ENCODE measurements at regions of chr9 and their contacts with region 1.

Region 1: DNA sequence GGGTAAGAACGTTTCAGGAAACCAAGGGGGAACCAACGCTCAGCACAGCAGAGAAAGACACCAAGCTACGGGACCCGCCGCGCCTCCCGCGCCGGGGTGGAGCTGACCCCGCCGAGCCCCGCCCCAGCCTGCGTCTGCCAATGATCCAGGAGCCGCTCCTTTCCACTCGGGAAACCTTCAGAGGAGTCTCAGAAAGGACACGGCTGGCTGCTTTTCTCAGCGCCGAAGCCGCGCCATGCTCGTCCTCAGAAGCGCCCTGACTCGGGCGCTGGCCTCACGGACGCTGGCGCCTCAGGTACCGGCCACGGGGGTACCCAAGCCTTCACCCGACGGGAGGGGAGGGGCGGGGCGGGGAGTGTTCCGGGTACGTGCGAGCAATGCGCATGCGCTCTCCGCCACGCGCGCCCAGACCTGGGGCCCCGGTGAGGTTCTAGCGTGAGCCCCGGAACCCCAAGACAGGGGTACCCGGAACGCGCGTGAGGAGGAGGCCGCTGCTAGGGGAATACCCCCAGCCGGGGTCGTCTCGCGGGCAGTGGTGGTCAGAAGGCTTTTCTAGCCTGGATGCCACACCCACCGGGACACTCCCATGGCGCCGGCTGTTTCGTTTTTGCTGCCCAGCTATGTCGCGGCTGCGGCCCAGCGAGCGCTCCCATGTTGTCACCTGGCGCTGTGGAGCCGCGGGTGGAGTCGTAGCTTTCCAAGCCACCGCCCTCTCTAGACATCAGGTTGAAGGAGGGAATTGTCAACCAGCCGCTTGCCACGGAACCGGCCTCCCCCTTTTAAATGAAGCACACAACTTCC is at the start of gene NIPSNAP3A:
- DNase-seq: peak; percentile 89
- H3K4me3 Mint-ChIP-seq: peak within 1 kb of the TSS; percentile 99
- H3K27ac Mint-ChIP-seq: peak within 1 kb of the TSS; percentile 97
- H3K4me1 Mint-ChIP-seq: peaks cover 24% of the 10 kb centered on the region
- H3K27me3 Mint-ChIP-seq: no peaks in the 10 kb centered on the region
- total RNA-seq, gene NIPSNAP3A: 17.8 TPM

Region 2: DNA sequence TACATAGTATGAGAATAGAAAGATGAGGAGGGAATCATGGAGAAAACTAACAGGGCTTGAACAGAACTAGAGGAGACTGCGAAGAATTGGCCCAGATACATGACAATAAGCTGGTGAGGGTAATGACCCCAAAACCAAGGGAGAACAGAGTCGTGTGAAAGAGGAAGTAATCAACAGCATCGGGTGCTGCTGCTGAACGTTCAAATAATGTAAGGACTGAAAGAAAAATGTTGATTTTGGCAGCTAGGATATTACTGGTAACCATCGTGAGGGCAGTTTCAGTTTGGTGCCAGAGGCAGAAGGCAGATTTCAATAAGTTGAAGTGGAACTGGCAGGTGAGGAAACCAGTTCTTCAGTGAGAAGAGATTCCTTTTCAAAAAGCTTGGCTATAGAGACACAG is 720.5 kb before region 1 on chr9:
- CTCF ChIA-PET with region 1: no interaction called
- intact Hi-C with region 1: loop called (anchors 5 kb)
- DNase-seq: no peak
- H3K4me3 Mint-ChIP-seq: no peak overlapping the region
- H3K27ac Mint-ChIP-seq: no peak overlapping the region
- H3K4me1 Mint-ChIP-seq: peaks cover 19% of the 10 kb centered on the region
- H3K27me3 Mint-ChIP-seq: peaks cover 7% of the 10 kb centered on the region

Region 3: GRCh38 chr9:104386425-104387069 is 361.2 kb before region 1 on chr9:
- CTCF ChIA-PET with region 1: interaction called, 3 read pairs
- intact Hi-C with region 1: loop called (anchors 1 kb)
- DNase-seq: no peak
- H3K4me3 Mint-ChIP-seq: no peak overlapping the region
- H3K27ac Mint-ChIP-seq: no peak overlapping the region
- H3K4me1 Mint-ChIP-seq: no peaks in the 10 kb centered on the region
- H3K27me3 Mint-ChIP-seq: no peaks in the 10 kb centered on the region

Region 4: GRCh38 chr9:104675611-104676010 is 72.1 kb before region 1 on chr9:
- CTCF ChIA-PET with region 1: no interaction called
- intact Hi-C with region 1: no loop called
- DNase-seq: no peak
- H3K4me3 Mint-ChIP-seq: no peak overlapping the region
- H3K27ac Mint-ChIP-seq: no peak overlapping the region
- H3K4me1 Mint-ChIP-seq: no peaks in the 10 kb centered on the region
- H3K27me3 Mint-ChIP-seq: no peaks in the 10 kb centered on the region

Region 5: DNA sequence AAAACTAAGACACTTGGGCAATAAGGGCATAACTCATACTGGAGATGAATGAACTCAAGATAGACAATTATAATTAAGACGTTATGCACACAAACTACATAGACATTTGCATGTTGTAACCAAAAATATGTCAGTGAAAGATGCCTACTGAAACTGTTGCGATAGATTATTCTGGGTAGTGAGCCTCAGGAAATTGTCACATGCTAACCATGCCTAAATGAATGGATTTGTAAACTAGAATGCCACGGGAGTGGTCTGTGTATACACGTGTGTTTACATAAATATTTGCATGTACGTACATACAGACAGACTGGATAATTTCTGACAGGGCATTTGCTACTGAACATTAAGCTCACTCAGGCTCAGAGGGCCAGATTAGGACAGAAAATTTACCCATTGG is 17.4 kb after region 1 on chr9:
- CTCF ChIA-PET with region 1: interaction called, 4 read pairs
- intact Hi-C with region 1: loop called (anchors 1 kb)
- DNase-seq: no peak
- H3K4me3 Mint-ChIP-seq: peak overlapping the region; percentile 82
- H3K27ac Mint-ChIP-seq: no peak overlapping the region
- H3K4me1 Mint-ChIP-seq: peaks cover 6% of the 10 kb centered on the region
- H3K27me3 Mint-ChIP-seq: no peaks in the 10 kb centered on the region

Region 6: DNA sequence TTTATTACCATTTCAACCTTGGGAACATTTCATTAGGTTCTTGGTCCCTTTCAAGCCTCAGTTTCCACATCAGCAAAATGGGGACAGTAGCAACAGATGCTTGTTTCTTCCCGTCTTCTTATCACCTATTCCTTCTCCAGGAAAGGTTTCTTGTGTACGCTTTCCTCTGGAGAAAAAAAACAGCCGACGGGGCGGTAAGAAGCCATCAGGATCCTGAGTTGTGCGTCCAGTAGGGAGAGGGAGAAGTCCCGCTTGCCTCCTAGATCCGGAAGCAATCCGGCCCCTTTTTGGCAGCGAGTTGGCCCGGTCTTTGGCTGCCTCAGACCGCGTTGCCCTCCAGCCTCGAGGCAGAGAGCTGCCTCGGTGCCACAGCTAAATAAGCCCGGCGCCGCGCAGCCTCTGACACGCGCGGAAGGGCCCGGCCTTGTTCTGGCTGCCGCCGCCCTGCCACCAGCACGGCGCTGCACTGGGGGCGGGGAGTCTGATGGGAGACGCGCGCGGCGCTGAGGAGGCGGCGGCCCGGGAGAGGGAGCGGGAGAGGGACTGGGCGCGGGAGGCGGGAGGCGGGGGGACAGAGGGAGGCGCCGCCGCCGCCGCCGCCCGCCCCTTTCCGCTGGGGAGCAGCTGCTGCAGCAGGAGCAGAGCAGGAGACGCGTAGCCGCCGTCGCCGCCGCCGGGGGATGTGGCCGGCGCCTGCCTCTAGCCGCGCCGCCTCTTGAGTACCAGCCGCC is 496.4 kb after region 1 on chr9 and contains the start of gene SLC44A1:
- CTCF ChIA-PET with region 1: no interaction called
- intact Hi-C with region 1: loop called (anchors 1 kb)
- DNase-seq: peak; percentile 95
- H3K4me3 Mint-ChIP-seq: peak within 1 kb of the TSS; percentile 83
- H3K27ac Mint-ChIP-seq: peak within 1 kb of the TSS; percentile 76
- H3K4me1 Mint-ChIP-seq: peaks cover 15% of the 10 kb centered on the region
- H3K27me3 Mint-ChIP-seq: peaks cover 14% of the 10 kb centered on the region
- total RNA-seq, gene SLC44A1: 17.6 to 18.6 TPM

Region 7: DNA sequence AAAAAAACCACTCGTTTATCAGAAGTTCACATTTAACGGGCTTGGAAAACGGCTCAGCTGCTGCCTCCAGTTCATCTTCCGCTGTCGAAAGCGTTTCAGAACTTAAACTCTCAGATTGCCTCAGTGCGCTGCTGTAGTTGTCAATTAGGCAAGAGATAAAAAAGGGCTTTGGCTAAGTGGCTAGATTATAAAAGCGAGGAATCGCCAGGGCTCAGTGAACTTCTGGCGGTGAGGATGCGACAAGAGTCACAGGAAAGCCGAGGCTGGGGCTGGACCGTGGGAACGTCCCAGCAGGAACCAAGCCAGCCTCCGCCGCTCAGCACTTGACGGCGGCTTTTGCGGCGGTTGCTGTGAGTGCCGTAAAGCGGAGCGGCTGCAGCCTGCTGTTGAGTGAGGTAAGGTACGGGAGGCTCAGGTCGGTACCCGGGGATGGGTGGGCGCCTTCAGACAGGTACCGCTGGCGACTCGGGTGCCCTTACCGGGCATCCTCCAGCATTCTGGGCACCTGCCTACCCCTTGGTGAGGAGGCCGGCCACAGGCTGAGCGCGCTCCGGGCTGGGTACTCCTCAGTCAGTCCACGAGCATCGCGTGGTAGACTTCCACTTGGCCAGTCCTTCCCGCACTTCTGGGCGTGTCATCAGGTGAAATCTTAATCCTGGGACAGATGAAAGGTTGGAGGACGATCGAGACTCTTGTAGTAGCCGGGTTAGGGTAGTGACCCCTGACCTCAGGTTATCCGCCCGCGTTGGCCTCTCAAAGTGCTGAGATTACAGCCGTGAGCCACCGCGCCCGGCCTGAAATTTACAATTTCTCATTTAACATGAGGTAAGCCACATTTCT is 810.2 kb after region 1 on chr9 and contains the start of gene FKTN:
- CTCF ChIA-PET with region 1: no interaction called
- intact Hi-C with region 1: loop called (anchors 2 kb)
- DNase-seq: peak; percentile 88
- H3K4me3 Mint-ChIP-seq: peak within 1 kb of the TSS; percentile 85
- H3K27ac Mint-ChIP-seq: peak within 1 kb of the TSS; percentile 77
- H3K4me1 Mint-ChIP-seq: peaks cover 16% of the 10 kb centered on the region
- H3K27me3 Mint-ChIP-seq: no peaks in the 10 kb centered on the region
- total RNA-seq, gene FKTN: 8.0 to 9.6 TPM

Measured in activated naive CD4-positive, alpha-beta T cell treated with anti-CD3 and anti-CD28 coated beads for 36 hours (primary cell).